Mammary epithelial cell (primary cell): ENCODE measurements at regions of chr3 and their contacts with region 1.

Region 1: DNA sequence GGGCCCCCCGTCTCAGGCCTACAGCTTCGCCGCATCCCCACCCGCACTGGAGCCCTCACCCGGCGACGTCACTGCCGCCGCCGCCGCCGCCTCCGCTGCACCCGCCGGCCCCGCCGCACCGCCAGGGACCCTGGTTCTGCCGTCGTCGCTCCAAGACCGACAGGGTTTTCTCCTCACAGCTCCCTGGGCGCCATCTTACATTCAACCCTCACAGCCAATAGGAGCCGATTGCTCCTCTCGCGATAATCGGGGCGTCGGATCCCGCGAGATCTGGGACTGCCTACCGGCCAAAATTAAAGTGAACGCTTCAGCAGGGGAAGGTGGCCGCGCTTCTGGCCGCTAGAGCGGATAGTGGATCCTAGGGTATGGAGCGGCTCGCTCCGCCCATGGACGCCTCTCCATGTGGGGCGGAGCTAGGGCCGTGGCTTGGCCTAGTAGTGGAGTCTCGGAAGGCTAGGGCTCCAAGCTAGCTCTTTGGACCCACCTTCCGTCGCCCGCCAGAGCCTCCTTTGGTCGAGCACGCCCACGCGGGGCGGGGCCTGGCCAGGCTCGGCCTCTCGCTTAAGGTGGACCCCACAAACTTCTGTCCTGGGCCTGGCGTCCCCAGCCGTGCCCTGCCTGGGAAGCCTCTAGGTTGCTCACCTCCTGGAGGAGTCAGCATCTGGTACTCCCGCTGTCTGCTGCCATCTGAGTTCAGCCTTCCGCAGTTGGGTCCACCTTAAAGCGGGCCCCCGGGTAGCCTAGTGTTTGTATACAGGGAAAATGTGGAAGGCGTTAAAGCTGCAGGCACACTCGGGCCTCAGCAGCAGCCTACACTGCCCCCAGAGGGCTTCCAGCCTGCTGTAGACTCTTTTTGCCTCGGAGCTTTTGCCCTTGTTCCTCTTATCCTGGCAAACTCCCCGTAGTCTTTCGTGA is at the start of gene QRICH1:
- DNase-seq: peak; percentile 99
- H3K4me3 ChIP-seq: peak within 1 kb of the TSS; percentile 72 to 84 (median 80)
- H3K27ac ChIP-seq: peak within 1 kb of the TSS; percentile 90
- H3K4me1 ChIP-seq: peaks cover 11% of the 10 kb centered on the region
- H3K27me3 ChIP-seq: no peaks in the 10 kb centered on the region
- CTCF ChIP-seq: peak; percentile 65 to 66
- total RNA-seq, gene QRICH1: 88.7 to 89.7 TPM

Region 2: DNA sequence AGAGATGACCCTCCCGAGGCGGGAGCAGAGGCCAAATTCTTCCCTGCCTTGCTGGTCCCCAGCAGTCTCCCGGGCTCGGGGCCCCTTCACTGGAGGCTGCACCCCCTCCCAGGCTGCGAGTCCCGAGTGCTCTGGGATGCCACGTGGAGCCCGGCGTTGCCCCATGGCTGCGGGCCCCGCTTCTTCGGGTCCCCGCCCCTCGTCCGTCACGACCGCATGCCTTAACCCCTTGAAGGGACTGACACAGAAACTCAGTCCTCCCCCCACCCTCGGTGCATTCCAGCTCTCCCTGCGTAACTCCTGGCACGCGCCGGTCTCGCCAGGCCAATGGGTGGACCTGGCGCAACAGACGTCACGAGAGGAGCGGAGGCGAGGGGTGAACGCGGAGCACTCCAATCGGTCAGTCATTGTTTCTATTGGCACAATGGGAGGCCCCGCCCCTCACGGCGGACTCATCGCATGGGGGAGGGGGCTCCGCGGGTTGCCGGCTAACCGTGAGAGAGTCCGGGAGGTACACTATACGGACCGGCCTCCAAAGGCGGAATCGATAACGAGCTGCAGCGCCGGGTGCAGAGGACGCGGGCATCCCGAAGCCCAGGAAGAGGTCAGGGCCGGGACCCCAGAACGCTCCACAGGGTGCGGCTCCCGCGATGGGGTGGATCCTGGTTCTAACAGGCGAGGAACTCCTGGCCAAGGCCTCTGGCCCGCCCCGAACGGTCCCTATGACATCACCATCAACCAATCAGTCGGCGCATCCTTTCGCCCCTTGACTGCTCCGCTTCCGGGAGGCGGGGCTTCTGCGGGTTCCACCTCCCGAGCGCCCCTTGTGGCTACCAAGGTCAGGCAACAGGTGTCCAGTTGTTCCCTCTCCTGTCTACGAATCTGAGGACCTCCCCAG is 430.4 kb before region 1 on chr3:
- CTCF ChIA-PET with region 1: no interaction called
- dilution Hi-C with region 1: no loop called
- in situ Hi-C with region 1: no loop called
- intact Hi-C with region 1: loop called (anchors 5 kb)
- DNase-seq: peak; percentile 99
- H3K4me3 ChIP-seq: peak overlapping the region; percentile 58 to 60 (median 59)
- H3K27ac ChIP-seq: peak overlapping the region; percentile 87
- H3K4me1 ChIP-seq: peaks cover 21% of the 10 kb centered on the region
- H3K27me3 ChIP-seq: no peaks in the 10 kb centered on the region
- CTCF ChIP-seq: peak; percentile 72 to 84

Region 3: GRCh38 chr3:48966876-48967361 is 127.2 kb before region 1 on chr3:
- CTCF ChIA-PET with region 1: no interaction called
- dilution Hi-C with region 1: no loop called
- in situ Hi-C with region 1: no loop called
- intact Hi-C with region 1: no loop called
- DNase-seq: peak; percentile 63
- H3K4me3 ChIP-seq: no peak overlapping the region
- H3K27ac ChIP-seq: no peak overlapping the region
- H3K4me1 ChIP-seq: no peaks in the 10 kb centered on the region
- H3K27me3 ChIP-seq: no peaks in the 10 kb centered on the region
- CTCF ChIP-seq: no peak

Region 4: DNA sequence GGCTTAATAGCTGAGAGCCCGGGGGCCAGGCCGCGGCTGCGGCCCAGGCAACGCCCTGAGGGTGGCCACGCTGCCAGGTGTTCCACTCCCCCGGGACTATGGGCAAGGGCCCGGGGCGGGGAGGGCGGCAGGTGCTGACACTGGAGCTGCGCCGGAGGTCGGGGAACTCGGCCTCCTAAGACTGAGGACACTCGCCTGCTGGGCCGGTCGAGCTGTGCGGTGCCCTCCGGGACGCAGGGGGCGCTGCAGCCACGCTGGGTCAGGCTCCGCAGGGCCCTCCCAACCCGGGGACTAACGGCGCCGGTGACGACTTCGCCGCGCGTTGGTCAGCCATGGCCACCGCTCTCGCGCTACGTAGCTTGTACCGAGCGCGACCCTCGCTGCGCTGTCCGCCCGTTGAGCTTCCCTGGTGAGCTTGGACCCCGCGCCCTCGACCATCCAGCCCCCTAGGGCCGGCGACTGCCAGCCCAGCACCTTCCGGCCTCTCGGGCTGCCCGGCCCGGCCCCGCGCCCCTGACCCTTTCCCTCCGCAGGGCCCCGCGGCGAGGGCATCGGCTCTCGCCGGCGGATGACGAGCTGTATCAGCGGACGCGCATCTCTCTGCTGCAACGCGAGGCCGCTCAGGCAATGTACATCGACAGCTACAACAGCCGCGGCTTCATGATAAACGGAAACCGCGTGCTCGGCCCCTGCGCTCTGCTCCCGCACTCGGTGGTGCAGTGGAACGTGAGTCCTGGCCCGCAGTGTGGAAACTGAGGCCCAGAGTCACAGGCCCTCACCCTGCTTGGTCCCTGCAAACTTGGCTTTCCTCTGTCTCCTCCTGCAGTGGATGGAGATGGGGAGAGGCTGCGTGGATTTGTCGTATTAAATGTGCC is 72.1 kb before region 1 on chr3 and contains the start of gene NDUFAF3:
- CTCF ChIA-PET with region 1: no interaction called
- dilution Hi-C with region 1: no loop called
- in situ Hi-C with region 1: no loop called
- intact Hi-C with region 1: loop called (anchors 1 kb)
- DNase-seq: peak; percentile 95
- H3K4me3 ChIP-seq: peak within 1 kb of the TSS; percentile 65 to 89 (median 86)
- H3K27ac ChIP-seq: peak within 1 kb of the TSS; percentile 89
- H3K4me1 ChIP-seq: peaks cover 34% of the 10 kb centered on the region
- H3K27me3 ChIP-seq: no peaks in the 10 kb centered on the region
- CTCF ChIP-seq: peak; percentile 75 to 97
- total RNA-seq, gene NDUFAF3: 27.0 to 83.6 TPM

Region 5: GRCh38 chr3:49120438-49121131 is 26.5 kb after region 1 on chr3 and contains the start of gene USP19:
- CTCF ChIA-PET with region 1: no interaction called
- dilution Hi-C with region 1: no loop called
- in situ Hi-C with region 1: no loop called
- intact Hi-C with region 1: loop called (anchors 1 kb)
- DNase-seq: peak; percentile 90
- H3K4me3 ChIP-seq: peak within 1 kb of the TSS; percentile 58 to 96 (median 70)
- H3K27ac ChIP-seq: peak within 1 kb of the TSS; percentile 67
- H3K4me1 ChIP-seq: peaks cover 17% of the 10 kb centered on the region
- H3K27me3 ChIP-seq: no peaks in the 10 kb centered on the region
- CTCF ChIP-seq: no peak
- total RNA-seq, gene USP19: 30.5 to 37.2 TPM

Region 6: GRCh38 chr3:49133226-49133951 is 39.3 kb after region 1 on chr3:
- CTCF ChIA-PET with region 1: interaction called, 10 read pairs
- dilution Hi-C with region 1: no loop called
- in situ Hi-C with region 1: no loop called
- intact Hi-C with region 1: loop called (anchors 1 kb)
- DNase-seq: peak; percentile 84
- H3K4me3 ChIP-seq: peak overlapping the region; percentile 68 to 74 (median 74)
- H3K27ac ChIP-seq: no peak overlapping the region
- H3K4me1 ChIP-seq: peaks cover 15% of the 10 kb centered on the region
- H3K27me3 ChIP-seq: no peaks in the 10 kb centered on the region
- CTCF ChIP-seq: no peak

Region 7: GRCh38 chr3:49305608-49306007 is 211.5 kb after region 1 on chr3:
- CTCF ChIA-PET with region 1: no interaction called
- dilution Hi-C with region 1: loop called (anchors 5 kb)
- in situ Hi-C with region 1: no loop called
- intact Hi-C with region 1: no loop called
- DNase-seq: no peak
- H3K4me3 ChIP-seq: no peak overlapping the region
- H3K27ac ChIP-seq: no peak overlapping the region
- H3K4me1 ChIP-seq: no peaks in the 10 kb centered on the region
- H3K27me3 ChIP-seq: no peaks in the 10 kb centered on the region
- CTCF ChIP-seq: no peak

Region 8: DNA sequence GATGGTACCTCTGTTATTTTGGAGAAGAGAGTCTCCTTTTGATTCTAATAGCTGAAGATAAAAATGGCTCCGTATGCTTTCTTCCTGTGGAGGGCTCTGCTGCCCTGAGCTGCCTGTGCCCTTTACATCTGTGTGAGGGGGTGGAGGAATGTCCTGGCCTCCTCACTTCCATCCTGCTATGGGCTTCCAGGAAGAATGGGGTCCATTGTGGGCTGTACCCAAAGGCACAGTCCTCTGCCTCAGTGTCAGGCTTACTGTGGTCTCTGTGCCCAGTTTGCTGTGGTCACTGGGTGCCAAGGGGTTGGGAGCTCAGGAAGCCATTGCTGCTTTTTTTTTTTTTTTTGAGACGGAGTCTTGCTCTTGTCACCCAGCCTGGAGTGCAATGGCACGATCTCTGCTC is 390.4 kb after region 1 on chr3:
- CTCF ChIA-PET with region 1: no interaction called
- dilution Hi-C with region 1: no loop called
- in situ Hi-C with region 1: no loop called
- intact Hi-C with region 1: no loop called
- DNase-seq: no peak
- H3K4me3 ChIP-seq: no peak overlapping the region
- H3K27ac ChIP-seq: no peak overlapping the region
- H3K4me1 ChIP-seq: peaks cover 18% of the 10 kb centered on the region
- H3K27me3 ChIP-seq: no peaks in the 10 kb centered on the region
- CTCF ChIP-seq: no peak